K562 (cell line): ENCODE measurements at regions of chr1 and their contacts with region 1.

Region 1: GRCh38 chr1:67214420-67215174 is 48.3 kb downstream of the IL23R start:
- DNase-seq: peak in 1 of 4 experiments; percentile 48
- ATAC-seq: peak; percentile 49
- H3K4me3 ChIP-seq: no peak overlapping the region
- H3K27ac ChIP-seq: no peak overlapping the region
- H3K4me1 ChIP-seq: peaks cover 4 to 13% of the 10 kb centered on the region in 2 experiments; a peak in 1 of 5 replicates
- H3K27me3 ChIP-seq: no peaks in the 10 kb centered on the region
- CTCF ChIP-seq: peak; percentile 47 to 57 (median 51); a peak in 5 of 6 replicates
- EP300 ChIP-seq: no peak
- POLR2A ChIP-seq: no peak
- RAD21 ChIP-seq: peak in 1 of 2 experiments; percentile 37; a peak in 2 of 4 replicates

Region 2: GRCh38 chr1:67171978-67172377 is 42.6 kb before region 1 on chr1:
- CTCF ChIA-PET with region 1: no interaction called
- POLR2A ChIA-PET with region 1: no interaction called
- in situ Hi-C with region 1: no loop called
- intact Hi-C with region 1: loop called (anchors 5 kb)
- DNase-seq: no peak
- ATAC-seq: no peak
- H3K4me3 ChIP-seq: no peak overlapping the region
- H3K27ac ChIP-seq: no peak overlapping the region
- H3K4me1 ChIP-seq: peaks cover 0 to 3% of the 10 kb centered on the region in 2 experiments; a peak in 2 of 5 replicates
- H3K27me3 ChIP-seq: no peaks in the 10 kb centered on the region
- CTCF ChIP-seq: no peak
- EP300 ChIP-seq: no peak
- POLR2A ChIP-seq: no peak
- RAD21 ChIP-seq: no peak

Region 3: DNA sequence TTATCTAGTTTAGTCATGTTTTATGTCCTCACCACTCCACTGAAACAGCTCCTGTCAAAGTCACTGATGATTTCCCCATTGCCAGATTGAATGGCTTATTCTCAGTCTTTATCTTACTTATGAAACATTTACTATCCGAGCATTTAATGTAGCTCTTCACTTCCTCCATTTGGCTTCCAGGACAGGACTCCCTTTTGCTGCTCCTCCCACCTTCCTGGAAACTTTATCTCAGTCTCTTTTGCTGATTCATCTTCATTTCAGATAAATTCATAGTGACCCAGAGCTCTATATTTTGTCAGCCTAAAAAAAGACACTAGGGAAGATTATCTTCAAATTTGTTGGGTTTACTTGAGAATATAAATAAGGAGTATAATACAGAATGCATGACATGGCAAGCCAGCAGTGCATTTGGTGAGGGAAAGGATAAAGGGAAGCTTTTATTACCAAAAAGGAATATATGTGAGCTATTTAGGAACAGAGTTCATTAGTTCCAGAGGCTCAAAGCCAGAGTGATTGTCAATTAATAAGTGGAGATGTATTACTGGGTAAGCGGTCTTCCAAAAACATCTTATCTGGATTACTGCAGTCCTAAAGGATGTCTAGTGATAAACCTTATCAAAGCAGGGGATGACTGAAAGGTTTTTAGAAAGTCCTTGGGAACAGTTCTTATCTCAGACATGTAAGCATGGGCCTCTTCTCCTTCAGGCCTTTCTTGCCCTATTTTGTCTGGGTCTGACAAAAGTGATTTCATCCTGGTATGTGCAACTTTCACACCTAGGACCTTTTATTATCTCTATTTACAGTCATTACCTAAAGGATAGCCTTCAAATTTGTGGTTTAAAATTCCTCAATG is 22.7 kb before region 1 on chr1:
- CTCF ChIA-PET with region 1: no interaction called
- POLR2A ChIA-PET with region 1: interaction called, 4 read pairs
- in situ Hi-C with region 1: no loop called
- intact Hi-C with region 1: loop called (anchors 2 kb)
- DNase-seq: peak; percentile 32 to 76 (median 48)
- ATAC-seq: peak; percentile 86
- H3K4me3 ChIP-seq: no peak overlapping the region
- H3K27ac ChIP-seq: peak overlapping the region; percentile 79
- H3K4me1 ChIP-seq: peaks cover 16 to 39% of the 10 kb centered on the region in 2 experiments
- H3K27me3 ChIP-seq: no peaks in the 10 kb centered on the region
- CTCF ChIP-seq: no peak
- EP300 ChIP-seq: peak; percentile 78
- POLR2A ChIP-seq: no peak
- RAD21 ChIP-seq: no peak